Activated naive CD4-positive, alpha-beta T cell treated with anti-CD3 and anti-CD28 coated beads, Interleukin-2, amount 10 ng/mL, durations not matched to agents 7 days and 5 days (primary cell): ENCODE measurements at regions of chr11 and their contacts with region 1.

Region 1: DNA sequence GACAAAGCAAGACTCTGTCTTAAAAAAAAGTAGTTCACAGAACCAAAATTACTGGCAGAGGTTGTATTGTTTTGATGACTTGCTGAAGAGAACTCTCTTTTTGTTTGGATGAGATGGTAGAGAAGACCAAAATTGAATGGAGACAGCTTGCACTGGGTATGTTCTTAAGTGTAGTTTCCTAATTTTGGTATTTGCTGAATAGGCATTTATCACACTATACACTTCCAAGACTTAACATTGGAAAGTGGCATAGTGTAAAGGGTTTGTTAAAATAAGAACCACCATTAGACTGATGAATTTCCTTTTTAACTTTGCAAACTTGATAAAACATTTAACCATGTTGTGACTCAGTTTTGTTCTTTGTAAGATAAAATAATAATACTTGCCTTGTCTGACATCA is 5.3 kb upstream of the DCUN1D5 start:
- DNase-seq: no peak
- H3K4me3 Mint-ChIP-seq: no peak overlapping the region
- H3K27ac Mint-ChIP-seq: no peak overlapping the region
- H3K4me1 Mint-ChIP-seq: peaks cover 4% of the 10 kb centered on the region
- H3K27me3 Mint-ChIP-seq: peaks cover 22% of the 10 kb centered on the region

Region 2: GRCh38 chr11:103108933-103109817 is 11.9 kb after region 1 on chr11 and contains the start of gene DYNC2H1:
- CTCF ChIA-PET with region 1: interaction called, 10 read pairs
- DNase-seq: peak; percentile 91
- H3K4me3 Mint-ChIP-seq: peak within 1 kb of the TSS; percentile 93
- H3K27ac Mint-ChIP-seq: peak within 1 kb of the TSS; percentile 85
- H3K4me1 Mint-ChIP-seq: peaks cover 18% of the 10 kb centered on the region
- H3K27me3 Mint-ChIP-seq: peaks cover 21% of the 10 kb centered on the region

Region 3: DNA sequence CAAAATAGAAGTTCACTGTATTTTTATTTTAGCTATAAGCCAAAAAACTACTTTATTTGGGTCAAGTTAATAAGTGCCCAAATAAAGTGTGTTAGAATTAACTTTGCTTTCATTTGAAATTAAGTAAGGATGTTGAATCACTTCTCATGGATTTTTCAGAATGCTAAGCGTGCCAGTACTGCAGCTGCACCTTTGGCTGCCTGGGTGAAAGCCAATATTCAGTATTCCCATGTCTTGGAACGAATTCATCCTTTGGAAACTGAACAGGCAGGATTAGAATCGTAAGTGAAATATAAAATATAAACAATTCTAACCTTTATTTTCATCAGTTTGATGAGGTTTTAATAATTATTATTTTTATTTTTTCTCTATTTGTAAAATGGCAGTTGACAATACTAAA is 125.5 kb after region 1 on chr11:
- CTCF ChIA-PET with region 1: no interaction called
- DNase-seq: no peak
- H3K4me3 Mint-ChIP-seq: no peak overlapping the region
- H3K27ac Mint-ChIP-seq: no peak overlapping the region
- H3K4me1 Mint-ChIP-seq: no peaks in the 10 kb centered on the region
- H3K27me3 Mint-ChIP-seq: no peaks in the 10 kb centered on the region